ENCODE measurements at regions of chr7 and their contacts with region 1.

Region 1: DNA sequence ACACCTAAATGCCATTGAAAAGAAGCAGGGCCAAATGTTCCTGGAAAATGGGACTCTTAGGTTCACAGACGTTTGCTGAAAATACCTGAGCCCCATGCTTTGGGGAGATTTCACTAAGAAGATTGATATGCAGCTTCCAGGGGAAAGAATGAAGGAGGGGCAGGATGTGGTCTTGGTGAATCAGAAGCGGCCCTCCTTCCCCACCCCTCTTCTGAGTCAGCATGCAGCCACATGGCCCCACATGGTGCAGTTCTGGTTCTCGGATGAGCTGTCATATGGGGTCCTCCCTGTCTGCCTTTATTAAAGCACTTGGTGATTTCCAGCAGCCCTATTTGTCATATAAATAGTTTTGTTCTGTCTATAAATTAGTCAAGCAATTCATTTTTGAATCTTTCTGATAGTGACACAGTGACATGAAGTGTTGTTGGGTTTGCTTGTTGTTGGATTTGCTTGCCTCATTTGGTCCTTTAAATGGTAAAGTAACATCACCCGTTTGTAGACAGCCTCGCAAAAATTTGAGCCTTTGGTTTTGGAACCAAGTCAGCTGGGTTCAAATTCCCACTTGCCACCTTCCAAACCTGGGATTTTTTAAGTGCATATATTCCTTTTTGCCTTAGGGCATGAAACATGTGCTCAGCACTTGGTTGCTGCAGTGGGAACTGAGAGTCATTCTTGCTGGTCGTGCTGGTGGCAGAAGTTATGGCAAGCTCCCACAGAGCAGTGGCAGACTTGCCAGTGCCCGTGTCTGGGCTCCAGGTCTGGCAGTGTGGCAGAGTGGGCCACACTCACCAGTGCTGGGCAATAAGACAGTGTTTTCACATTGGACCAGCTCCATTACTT is 68.1 kb upstream of the CDK6 start:
- DNase-seq: peak; percentile 95
- H3K4me3 Mint-ChIP-seq: peak overlapping the region; percentile 29
- H3K27ac Mint-ChIP-seq: peak overlapping the region; percentile 88
- H3K4me1 Mint-ChIP-seq: peaks cover 31% of the 10 kb centered on the region
- H3K27me3 Mint-ChIP-seq: no peaks in the 10 kb centered on the region

Region 2: DNA sequence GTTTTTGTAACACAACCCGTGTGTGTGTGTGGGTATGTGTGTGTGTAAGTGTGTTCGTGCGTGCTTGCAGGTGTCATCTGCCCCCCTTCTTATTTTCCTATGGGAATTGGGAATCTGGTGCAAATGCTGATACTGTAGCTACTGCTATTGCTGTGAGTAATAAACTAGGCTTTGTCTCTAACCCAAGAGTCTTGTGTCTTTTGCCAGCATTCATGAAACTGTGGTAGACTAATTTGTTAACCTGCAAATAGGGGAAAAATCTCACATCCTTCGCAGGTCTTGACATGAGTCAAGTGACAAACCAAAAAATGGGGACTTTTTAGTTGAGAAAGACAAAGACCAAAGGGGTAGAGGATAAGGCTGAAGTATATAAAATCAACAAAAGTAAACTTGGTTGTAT is 256.4 kb before region 1 on chr7:
- CTCF ChIA-PET with region 1: no interaction called
- POLR2A ChIA-PET with region 1: no interaction called
- intact Hi-C with region 1: loop called (anchors 1 kb)
- DNase-seq: no peak
- H3K4me3 Mint-ChIP-seq: peak overlapping the region; percentile 16
- H3K27ac Mint-ChIP-seq: peak overlapping the region; percentile 96
- H3K4me1 Mint-ChIP-seq: peaks cover 91% of the 10 kb centered on the region
- H3K27me3 Mint-ChIP-seq: no peaks in the 10 kb centered on the region

Region 3: GRCh38 chr7:92797693-92798092 is 106.8 kb before region 1 on chr7:
- CTCF ChIA-PET with region 1: no interaction called
- POLR2A ChIA-PET with region 1: no interaction called
- intact Hi-C with region 1: loop called (anchors 1 kb)
- DNase-seq: peak; percentile 64
- H3K4me3 Mint-ChIP-seq: no peak overlapping the region
- H3K27ac Mint-ChIP-seq: no peak overlapping the region
- H3K4me1 Mint-ChIP-seq: peaks cover 32% of the 10 kb centered on the region
- H3K27me3 Mint-ChIP-seq: no peaks in the 10 kb centered on the region

Region 4: GRCh38 chr7:92868683-92869293 is 35.7 kb before region 1 on chr7:
- CTCF ChIA-PET with region 1: no interaction called
- POLR2A ChIA-PET with region 1: no interaction called
- intact Hi-C with region 1: loop called (anchors 1 kb)
- DNase-seq: no peak
- H3K4me3 Mint-ChIP-seq: no peak overlapping the region
- H3K27ac Mint-ChIP-seq: no peak overlapping the region
- H3K4me1 Mint-ChIP-seq: peaks cover 7% of the 10 kb centered on the region
- H3K27me3 Mint-ChIP-seq: no peaks in the 10 kb centered on the region

Region 5: GRCh38 chr7:93036807-93037206 is 132.3 kb after region 1 on chr7:
- CTCF ChIA-PET with region 1: interaction called, 4 read pairs
- POLR2A ChIA-PET with region 1: interaction called, 9 read pairs
- intact Hi-C with region 1: loop called (anchors 1 kb)
- DNase-seq: peak; percentile 64
- H3K4me3 Mint-ChIP-seq: no peak overlapping the region
- H3K27ac Mint-ChIP-seq: peak overlapping the region; percentile 53
- H3K4me1 Mint-ChIP-seq: peaks cover 22% of the 10 kb centered on the region
- H3K27me3 Mint-ChIP-seq: no peaks in the 10 kb centered on the region

Region 6: GRCh38 chr7:93231799-93232672 is 327.5 kb after region 1 on chr7 and contains the start of gene VPS50:
- CTCF ChIA-PET with region 1: no interaction called
- POLR2A ChIA-PET with region 1: no interaction called
- intact Hi-C with region 1: loop called (anchors 1 kb)
- DNase-seq: peak; percentile 95
- H3K4me3 Mint-ChIP-seq: peak within 1 kb of the TSS; percentile 91
- H3K27ac Mint-ChIP-seq: peak within 1 kb of the TSS; percentile 90
- H3K4me1 Mint-ChIP-seq: peaks cover 11% of the 10 kb centered on the region
- H3K27me3 Mint-ChIP-seq: no peaks in the 10 kb centered on the region
- total RNA-seq, gene VPS50: 15.2 to 18.0 TPM